Heart left ventricle (tissue), 16 donors: ENCODE measurements at regions of chr7 and their contacts with region 1.

Region 1: GRCh38 chr7:35032166-35032565 is 5.1 kb downstream of the DPY19L1 start:
- DNase-seq: no peak
- ATAC-seq: no peak
- H3K4me3 ChIP-seq: no peak overlapping the region
- H3K27ac ChIP-seq: no peak overlapping the region
- H3K4me1 ChIP-seq: peaks cover 0 to 30% (median 16%) of the 10 kb centered on the region in 12 donors
- H3K27me3 ChIP-seq: no peaks in the 10 kb centered on the region
- CTCF ChIP-seq: no peak
- POLR2A ChIP-seq: no peak

Region 2: GRCh38 chr7:34675749-34676374 is 356.3 kb before region 1 on chr7:
- intact Hi-C with region 1: loop called in 3 of 10 experiments (anchors 5 to 10 kb)
- DNase-seq: no peak
- ATAC-seq: peak in 2 of 4 donors; percentile 57 to 65
- H3K4me3 ChIP-seq: no peak overlapping the region
- H3K27ac ChIP-seq: no peak overlapping the region
- H3K4me1 ChIP-seq: no peaks in the 10 kb centered on the region
- H3K27me3 ChIP-seq: no peaks in the 10 kb centered on the region
- CTCF ChIP-seq: peak; percentile 40 to 63 (median 48)
- POLR2A ChIP-seq: no peak